ENCODE measurements at regions of chr19 and their contacts with region 1.

Region 1: GRCh38 chr19:47013041-47013517 is 6.6 kb upstream of the NPAS1 start:
- DNase-seq: peak; percentile 41 to 80 (median 65)
- ATAC-seq: peak; percentile 90
- H3K4me3 ChIP-seq: no peak overlapping the region
- H3K4me3 Mint-ChIP-seq: no peak overlapping the region
- H3K27ac ChIP-seq: no peak overlapping the region
- H3K27ac Mint-ChIP-seq: no peak overlapping the region
- H3K4me1 ChIP-seq: no peaks in the 10 kb centered on the region
- H3K4me1 Mint-ChIP-seq: peaks cover 9% of the 10 kb centered on the region
- H3K27me3 ChIP-seq: peaks cover 0 to 5% of the 10 kb centered on the region in 2 experiments
- H3K27me3 Mint-ChIP-seq: peaks cover 11% of the 10 kb centered on the region
- CTCF ChIP-seq: peak; percentile 99

Region 2: GRCh38 chr19:46990991-46991676 is 21.9 kb before region 1 on chr19:
- CTCF ChIA-PET with region 1: interaction called, 23 read pairs
- POLR2A ChIA-PET with region 1: no interaction called
- intact Hi-C with region 1: no loop called
- DNase-seq: peak in 8 of 9 experiments; percentile 37 to 80 (median 65)
- ATAC-seq: peak; percentile 73
- H3K4me3 ChIP-seq: no peak overlapping the region
- H3K4me3 Mint-ChIP-seq: no peak overlapping the region
- H3K27ac ChIP-seq: no peak overlapping the region
- H3K27ac Mint-ChIP-seq: no peak overlapping the region
- H3K4me1 ChIP-seq: peaks cover 10% of the 10 kb centered on the region
- H3K4me1 Mint-ChIP-seq: peaks cover 17% of the 10 kb centered on the region
- H3K27me3 ChIP-seq: no peaks in the 10 kb centered on the region
- H3K27me3 Mint-ChIP-seq: no peaks in the 10 kb centered on the region
- CTCF ChIP-seq: peak; percentile 63

Region 3: GRCh38 chr19:47002107-47002766 is 10.8 kb before region 1 on chr19:
- CTCF ChIA-PET with region 1: interaction called, 37 read pairs
- POLR2A ChIA-PET with region 1: no interaction called
- intact Hi-C with region 1: no loop called
- DNase-seq: no peak
- ATAC-seq: no peak
- H3K4me3 ChIP-seq: no peak overlapping the region
- H3K4me3 Mint-ChIP-seq: no peak overlapping the region
- H3K27ac ChIP-seq: no peak overlapping the region
- H3K27ac Mint-ChIP-seq: no peak overlapping the region
- H3K4me1 ChIP-seq: no peaks in the 10 kb centered on the region
- H3K4me1 Mint-ChIP-seq: peaks cover 16% of the 10 kb centered on the region
- H3K27me3 ChIP-seq: no peaks in the 10 kb centered on the region
- H3K27me3 Mint-ChIP-seq: peaks cover 6% of the 10 kb centered on the region
- CTCF ChIP-seq: no peak

Region 4: GRCh38 chr19:47028195-47028601 is 15.1 kb after region 1 on chr19:
- CTCF ChIA-PET with region 1: interaction called, 29 read pairs
- POLR2A ChIA-PET with region 1: no interaction called
- intact Hi-C with region 1: loop called (anchors 1 kb)
- DNase-seq: no peak
- ATAC-seq: no peak
- H3K4me3 ChIP-seq: no peak overlapping the region
- H3K4me3 Mint-ChIP-seq: no peak overlapping the region
- H3K27ac ChIP-seq: no peak overlapping the region
- H3K27ac Mint-ChIP-seq: no peak overlapping the region
- H3K4me1 ChIP-seq: peaks cover 8% of the 10 kb centered on the region
- H3K4me1 Mint-ChIP-seq: peaks cover 2% of the 10 kb centered on the region
- H3K27me3 ChIP-seq: peaks cover 14 to 18% of the 10 kb centered on the region in 2 experiments
- H3K27me3 Mint-ChIP-seq: peaks cover 49% of the 10 kb centered on the region
- CTCF ChIP-seq: no peak

Region 5: DNA sequence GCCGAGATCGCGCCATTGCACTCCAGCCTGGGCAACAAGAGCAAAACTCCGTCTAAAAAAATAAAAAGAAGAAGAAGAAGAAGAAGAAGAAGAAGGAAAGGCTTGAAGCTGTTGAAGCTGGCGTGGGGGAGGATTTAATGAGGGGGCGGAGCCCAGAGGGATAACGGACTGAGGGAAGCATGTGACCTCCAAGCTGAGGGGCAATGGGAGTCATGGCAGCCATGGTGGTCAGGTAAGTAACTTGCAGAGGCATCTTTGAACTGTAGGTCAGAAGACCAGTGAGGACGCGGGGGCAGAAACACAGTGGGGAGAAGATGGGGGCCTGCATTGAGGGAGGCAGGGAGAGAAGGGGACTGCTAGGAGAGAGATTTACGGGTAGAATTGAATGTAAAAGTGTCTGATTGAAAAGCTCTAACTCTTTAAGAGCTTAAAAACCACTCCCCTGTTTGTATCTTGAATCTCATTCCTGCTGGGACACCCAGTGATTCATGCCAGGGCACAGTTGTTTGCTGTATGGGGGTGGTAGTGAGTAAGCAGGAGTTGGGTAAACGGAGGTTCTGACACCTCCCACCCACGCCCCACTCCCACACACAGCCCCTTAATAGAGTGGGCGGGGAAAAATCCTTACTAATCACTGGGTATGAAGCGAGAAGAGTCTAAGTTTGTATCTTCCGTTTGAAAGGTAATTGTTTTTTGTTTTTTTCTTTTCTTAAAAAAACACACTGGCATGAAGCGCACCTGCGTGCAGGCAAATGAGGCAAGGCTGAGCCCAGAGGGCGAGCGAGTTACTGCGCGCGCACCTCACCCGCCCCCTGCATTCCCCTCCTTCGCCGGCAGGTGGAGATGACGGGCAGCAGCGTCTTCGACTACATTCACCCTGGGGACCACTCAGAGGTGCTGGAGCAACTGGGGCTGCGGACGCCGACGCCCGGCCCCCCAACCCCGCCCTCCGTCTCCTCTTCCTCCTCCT is 22.3 kb after region 1 on chr19:
- CTCF ChIA-PET with region 1: interaction called, 37 read pairs
- POLR2A ChIA-PET with region 1: interaction called, 3 read pairs
- intact Hi-C with region 1: loop called (anchors 1 kb)
- DNase-seq: peak; percentile 90 to 99 (median 96)
- ATAC-seq: peak; percentile 98
- H3K4me3 ChIP-seq: peak overlapping the region; percentile 52 to 58
- H3K4me3 Mint-ChIP-seq: peak overlapping the region; percentile 88
- H3K27ac ChIP-seq: peak overlapping the region in 1 of 2 experiments; percentile 30
- H3K27ac Mint-ChIP-seq: peak overlapping the region; percentile 85
- H3K4me1 ChIP-seq: peaks cover 16% of the 10 kb centered on the region
- H3K4me1 Mint-ChIP-seq: peaks cover 17% of the 10 kb centered on the region
- H3K27me3 ChIP-seq: peaks cover 4 to 6% of the 10 kb centered on the region in 2 experiments
- H3K27me3 Mint-ChIP-seq: peaks cover 8% of the 10 kb centered on the region
- CTCF ChIP-seq: peak; percentile 99

Region 6: GRCh38 chr19:47124937-47125668 is 112.0 kb after region 1 on chr19:
- CTCF ChIA-PET with region 1: interaction called, 8 read pairs
- POLR2A ChIA-PET with region 1: no interaction called
- intact Hi-C with region 1: loop called (anchors 1 kb)
- DNase-seq: peak in 4 of 9 experiments; percentile 11 to 79 (median 64)
- ATAC-seq: peak; percentile 55
- H3K4me3 ChIP-seq: no peak overlapping the region
- H3K4me3 Mint-ChIP-seq: no peak overlapping the region
- H3K27ac ChIP-seq: no peak overlapping the region
- H3K27ac Mint-ChIP-seq: no peak overlapping the region
- H3K4me1 ChIP-seq: peaks cover 2% of the 10 kb centered on the region
- H3K4me1 Mint-ChIP-seq: peaks cover 5% of the 10 kb centered on the region
- H3K27me3 ChIP-seq: no peaks in the 10 kb centered on the region
- H3K27me3 Mint-ChIP-seq: no peaks in the 10 kb centered on the region
- CTCF ChIP-seq: peak; percentile 75